Activated T-helper 2 cell treated with anti-CD3 and anti-CD28 coated beads, Interferon-gamma antibody, Interleukin-2, Interleukin-4, amounts not matched to agents 10 μg/mL and 5 μg/mL and 100 μg/mL, durations not matched to agents 14 hours and 24 hours and 36 hours (primary cell): ENCODE measurements at regions of chr17 and their contacts with region 1.

Region 1: GRCh38 chr17:75589012-75589918 is 1.7 kb downstream of the MYO15B start:
- DNase-seq: peak; percentile 88
- H3K4me3 Mint-ChIP-seq: peak overlapping the region; percentile 72
- H3K27ac Mint-ChIP-seq: no peak overlapping the region
- H3K4me1 Mint-ChIP-seq: peaks cover 2% of the 10 kb centered on the region
- H3K27me3 Mint-ChIP-seq: peaks cover 22% of the 10 kb centered on the region

Region 2: DNA sequence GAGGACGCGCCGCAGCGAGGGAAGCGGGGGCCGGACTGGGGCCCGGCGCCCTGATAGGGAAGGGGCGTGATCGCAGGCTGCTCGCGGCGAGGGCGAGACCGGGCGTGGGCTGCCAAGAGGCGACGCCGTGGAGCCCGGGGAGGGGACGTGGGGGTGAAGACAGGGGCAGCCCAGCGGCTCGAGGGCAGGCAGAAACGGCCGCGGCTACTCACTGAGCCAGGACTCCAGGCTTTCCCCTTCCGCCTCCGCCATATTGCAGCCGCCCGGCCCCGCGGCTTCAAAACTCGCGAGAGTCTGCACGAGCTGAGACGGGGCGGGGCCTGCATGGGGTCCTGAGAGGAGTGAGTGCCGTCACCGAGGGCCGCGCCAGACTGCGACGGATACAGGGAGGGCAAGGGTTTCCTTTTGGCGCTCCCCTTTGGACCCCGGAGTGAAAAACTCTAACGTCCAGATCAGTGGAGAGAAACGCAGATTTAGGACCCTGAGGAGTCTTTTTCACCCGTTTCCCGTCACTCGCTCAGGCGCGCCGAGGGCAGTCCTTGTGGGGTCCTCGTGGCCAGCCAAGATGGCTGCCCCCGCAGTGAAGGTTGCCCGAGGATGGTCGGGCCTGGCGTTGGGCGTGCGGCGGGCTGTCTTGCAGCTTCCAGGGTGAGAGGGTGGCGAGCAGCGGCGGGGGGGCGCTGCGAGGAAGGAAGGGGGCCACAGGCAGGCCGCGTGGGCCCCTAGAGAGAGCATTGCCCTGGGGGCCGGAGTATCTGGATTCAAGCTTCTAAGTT is 327.7 kb before region 1 on chr17 and contains the starts of genes GGA3 and MRPS7:
- intact Hi-C with region 1: loop called (anchors 10 kb)
- DNase-seq: peak; percentile 93
- H3K4me3 Mint-ChIP-seq: peak within 1 kb of the TSS; percentile 99
- H3K27ac Mint-ChIP-seq: peak within 1 kb of the TSS; percentile 100
- H3K4me1 Mint-ChIP-seq: peaks cover 43% of the 10 kb centered on the region
- H3K27me3 Mint-ChIP-seq: no peaks in the 10 kb centered on the region
- total RNA-seq, gene GGA3: 71.7 and 77.2 TPM in 2 replicates
- total RNA-seq, gene MRPS7: 99.4 and 101 TPM in 2 replicates

Region 3: DNA sequence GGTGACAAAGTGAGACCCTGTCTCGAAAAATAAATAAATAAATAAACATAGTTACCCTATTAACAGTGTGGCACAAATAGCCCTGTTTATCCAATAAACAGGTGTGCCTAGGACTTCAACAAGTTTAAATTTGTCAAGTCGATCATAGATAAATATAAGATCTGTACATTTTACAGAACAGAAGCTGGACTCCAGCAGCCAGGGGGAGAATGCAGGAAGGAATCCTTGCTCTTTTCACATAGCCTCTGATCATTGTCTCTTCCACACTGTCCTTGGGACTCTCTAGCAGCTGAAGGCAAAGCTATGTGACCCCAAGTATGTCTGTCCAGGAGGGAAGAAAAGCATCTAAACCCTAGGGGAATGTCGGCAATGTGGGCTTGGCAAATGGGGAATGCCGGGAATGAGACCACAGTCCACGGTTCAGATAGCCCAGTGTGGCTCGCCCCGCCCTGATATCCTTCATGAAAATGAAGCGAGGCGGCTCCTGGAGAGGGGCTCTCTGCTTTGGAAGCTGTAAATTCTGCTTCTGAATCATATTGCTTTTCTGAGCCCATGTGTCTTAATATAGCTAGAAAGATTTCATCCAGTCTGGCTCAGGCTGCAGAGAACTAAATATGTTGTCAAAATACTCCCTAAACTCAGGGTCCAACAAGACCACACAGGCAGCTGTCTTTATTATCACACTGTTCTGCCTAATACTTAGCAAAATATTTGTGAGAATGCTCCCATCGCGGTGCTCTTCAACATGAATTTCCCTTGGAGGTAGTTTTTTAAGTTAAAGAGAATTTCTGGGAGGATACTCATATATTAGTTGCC is 158.9 kb before region 1 on chr17:
- intact Hi-C with region 1: loop called (anchors 1 kb)
- DNase-seq: no peak
- H3K4me3 Mint-ChIP-seq: no peak overlapping the region
- H3K27ac Mint-ChIP-seq: no peak overlapping the region
- H3K4me1 Mint-ChIP-seq: peaks cover 17% of the 10 kb centered on the region
- H3K27me3 Mint-ChIP-seq: peaks cover 12% of the 10 kb centered on the region

Region 4: GRCh38 chr17:75524953-75525719 is 64.1 kb before region 1 on chr17 and contains the start of gene LLGL2:
- intact Hi-C with region 1: loop called (anchors 2 kb)
- DNase-seq: peak; percentile 77
- H3K4me3 Mint-ChIP-seq: peak within 1 kb of the TSS; percentile 54
- H3K27ac Mint-ChIP-seq: no peak within 1 kb of the TSS
- H3K4me1 Mint-ChIP-seq: peaks cover 12% of the 10 kb centered on the region
- H3K27me3 Mint-ChIP-seq: peaks cover 11% of the 10 kb centered on the region
- total RNA-seq, gene LLGL2: 12.1 and 13.5 TPM in 2 replicates

Region 5: DNA sequence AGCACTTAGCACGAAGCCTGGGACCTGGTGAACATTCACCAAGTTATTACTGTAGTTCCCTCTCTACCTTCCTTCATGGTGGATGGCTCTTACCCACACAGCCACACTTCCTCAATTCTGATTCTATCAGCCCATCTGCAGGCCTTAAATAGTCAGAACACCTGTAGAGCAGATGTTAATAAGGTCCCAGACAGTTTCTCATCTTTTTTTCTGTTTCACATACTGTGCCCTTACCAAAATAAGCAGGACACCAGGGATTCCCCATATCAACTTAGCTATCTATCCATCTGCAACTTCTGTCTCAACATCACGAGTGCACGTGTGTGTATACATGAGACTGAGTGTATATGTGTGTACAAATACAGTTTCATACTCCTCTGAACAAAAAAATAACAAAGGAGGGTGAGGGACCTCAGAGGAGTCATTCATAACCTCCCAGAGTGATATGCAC is 74.9 kb after region 1 on chr17:
- intact Hi-C with region 1: no loop called
- DNase-seq: no peak
- H3K4me3 Mint-ChIP-seq: no peak overlapping the region
- H3K27ac Mint-ChIP-seq: no peak overlapping the region
- H3K4me1 Mint-ChIP-seq: peaks cover 15% of the 10 kb centered on the region
- H3K27me3 Mint-ChIP-seq: no peaks in the 10 kb centered on the region

Region 6: GRCh38 chr17:75749545-75750389 is 160.5 kb after region 1 on chr17:
- intact Hi-C with region 1: loop called (anchors 5 kb)
- DNase-seq: peak; percentile 76
- H3K4me3 Mint-ChIP-seq: no peak overlapping the region
- H3K27ac Mint-ChIP-seq: no peak overlapping the region
- H3K4me1 Mint-ChIP-seq: peaks cover 10% of the 10 kb centered on the region
- H3K27me3 Mint-ChIP-seq: peaks cover 3% of the 10 kb centered on the region